Tibial artery (tissue), 4 donors: ENCODE measurements at regions of chr7 and their contacts with region 1.

Region 1: DNA sequence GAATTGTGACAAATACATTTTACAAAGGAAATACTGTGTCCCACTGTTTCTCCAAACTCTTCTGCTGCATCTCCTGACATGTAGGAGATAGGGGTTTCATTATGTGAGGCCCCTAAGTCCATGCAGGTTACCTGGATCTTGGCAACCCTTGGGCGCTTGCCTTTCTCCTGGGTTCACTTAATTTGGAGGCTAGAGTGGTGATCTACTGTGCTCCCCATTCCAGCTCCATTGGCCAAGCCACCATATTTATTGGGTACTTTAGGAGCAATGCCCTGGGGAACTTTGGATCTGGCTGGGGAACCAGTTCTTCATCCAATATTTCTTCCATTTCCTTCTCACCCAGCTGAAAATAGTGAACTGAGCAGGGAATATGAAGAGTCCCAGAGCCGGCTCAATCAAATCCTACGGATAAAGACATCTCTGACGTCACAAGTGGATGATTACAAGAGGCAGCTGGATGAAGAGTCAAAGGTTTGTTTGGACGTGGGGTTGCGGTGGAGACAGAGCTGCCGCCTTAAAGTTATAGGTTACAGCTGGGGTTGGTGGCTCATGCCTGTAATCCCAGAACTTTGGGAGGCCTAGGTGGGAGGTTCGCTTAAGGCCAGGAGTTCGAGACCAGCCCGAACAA is 18.5 kb downstream of the MYH16 start:
- DNase-seq: no peak
- H3K4me3 ChIP-seq: no peak overlapping the region
- H3K27ac ChIP-seq: no peak overlapping the region
- H3K4me1 ChIP-seq: no peaks in the 10 kb centered on the region
- H3K27me3 ChIP-seq: no peaks in the 10 kb centered on the region
- CTCF ChIP-seq: no peak

Region 2: GRCh38 chr7:99184532-99185218 is 106.4 kb before region 1 on chr7:
- intact Hi-C with region 1: loop called (anchors 10 kb)
- DNase-seq: no peak
- H3K4me3 ChIP-seq: no peak overlapping the region
- H3K27ac ChIP-seq: no peak overlapping the region
- H3K4me1 ChIP-seq: no peaks in the 10 kb centered on the region
- H3K27me3 ChIP-seq: no peaks in the 10 kb centered on the region
- CTCF ChIP-seq: no peak